HCT116 (cell line): ENCODE measurements at regions of chr1 and their contacts with region 1.

Region 1: GRCh38 chr1:47725992-47726855 is 271.0 kb downstream of the TRABD2B start:
- DNase-seq: peak; percentile 49
- ATAC-seq: peak; percentile 98
- H3K4me3 ChIP-seq: no peak overlapping the region
- H3K27ac ChIP-seq: no peak overlapping the region
- H3K4me1 ChIP-seq: no peaks in the 10 kb centered on the region
- H3K27me3 ChIP-seq: no peaks in the 10 kb centered on the region
- CTCF ChIP-seq: peak; percentile 81 to 95 (median 92)
- POLR2A ChIP-seq: no peak
- RAD21 ChIP-seq: peak; percentile 91

Region 2: DNA sequence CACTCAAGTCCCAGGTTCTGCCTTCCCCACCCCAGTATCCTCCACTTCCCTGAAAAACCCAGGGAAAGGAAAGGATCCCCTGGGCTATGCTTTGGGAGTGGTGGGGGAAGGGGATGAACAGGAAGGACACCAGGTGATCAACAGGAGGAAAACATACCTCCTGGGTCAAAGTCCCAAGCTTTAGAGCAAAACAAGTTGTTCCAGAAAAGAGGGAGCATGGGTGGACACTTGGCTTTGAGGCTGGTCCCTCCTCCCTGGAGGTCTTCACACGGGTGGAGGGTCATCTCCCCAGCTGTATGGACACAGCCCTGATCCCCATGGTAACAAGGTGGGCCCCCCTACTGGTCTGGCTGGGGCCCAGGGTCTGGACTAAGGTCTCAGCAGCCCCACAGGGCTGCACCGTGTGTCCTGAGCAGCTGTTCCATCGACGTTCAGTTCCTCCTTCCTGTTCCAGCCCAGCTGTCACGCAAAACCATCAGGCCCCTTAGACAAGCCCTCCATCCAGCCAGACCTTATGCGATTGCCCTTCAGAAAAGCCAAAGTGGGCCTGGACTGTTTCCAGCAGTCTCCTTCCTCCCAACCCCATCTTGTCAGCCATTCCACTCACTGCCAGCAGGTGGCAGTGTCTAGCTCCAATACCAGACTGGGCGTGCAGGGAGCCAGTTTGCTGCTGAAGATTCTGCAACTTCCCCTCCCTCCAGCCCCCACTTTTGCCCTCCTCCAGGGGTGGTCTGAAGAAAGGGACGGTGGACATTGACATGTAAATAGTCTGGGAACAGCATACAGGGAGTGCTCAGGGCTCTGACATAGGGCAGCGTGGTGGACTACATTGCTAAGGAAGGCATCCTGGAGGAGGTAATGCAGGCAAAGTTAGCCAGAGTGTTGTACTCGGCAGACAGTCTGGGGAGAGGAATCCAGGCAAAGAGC is 533.5 kb before region 1 on chr1:
- CTCF ChIA-PET with region 1: interaction called, 12 read pairs
- POLR2A ChIA-PET with region 1: no interaction called
- RAD21 ChIA-PET with region 1: no interaction called
- intact Hi-C with region 1: loop called (anchors 5 kb)
- DNase-seq: peak; percentile 42
- ATAC-seq: peak; percentile 85
- H3K4me3 ChIP-seq: no peak overlapping the region
- H3K27ac ChIP-seq: no peak overlapping the region
- H3K4me1 ChIP-seq: peaks cover 3 to 19% of the 10 kb centered on the region in 2 experiments; a peak in 3 of 4 replicates
- H3K27me3 ChIP-seq: no peaks in the 10 kb centered on the region
- CTCF ChIP-seq: peak; percentile 76 to 99 (median 98)
- POLR2A ChIP-seq: no peak
- RAD21 ChIP-seq: peak; percentile 85

Region 3: DNA sequence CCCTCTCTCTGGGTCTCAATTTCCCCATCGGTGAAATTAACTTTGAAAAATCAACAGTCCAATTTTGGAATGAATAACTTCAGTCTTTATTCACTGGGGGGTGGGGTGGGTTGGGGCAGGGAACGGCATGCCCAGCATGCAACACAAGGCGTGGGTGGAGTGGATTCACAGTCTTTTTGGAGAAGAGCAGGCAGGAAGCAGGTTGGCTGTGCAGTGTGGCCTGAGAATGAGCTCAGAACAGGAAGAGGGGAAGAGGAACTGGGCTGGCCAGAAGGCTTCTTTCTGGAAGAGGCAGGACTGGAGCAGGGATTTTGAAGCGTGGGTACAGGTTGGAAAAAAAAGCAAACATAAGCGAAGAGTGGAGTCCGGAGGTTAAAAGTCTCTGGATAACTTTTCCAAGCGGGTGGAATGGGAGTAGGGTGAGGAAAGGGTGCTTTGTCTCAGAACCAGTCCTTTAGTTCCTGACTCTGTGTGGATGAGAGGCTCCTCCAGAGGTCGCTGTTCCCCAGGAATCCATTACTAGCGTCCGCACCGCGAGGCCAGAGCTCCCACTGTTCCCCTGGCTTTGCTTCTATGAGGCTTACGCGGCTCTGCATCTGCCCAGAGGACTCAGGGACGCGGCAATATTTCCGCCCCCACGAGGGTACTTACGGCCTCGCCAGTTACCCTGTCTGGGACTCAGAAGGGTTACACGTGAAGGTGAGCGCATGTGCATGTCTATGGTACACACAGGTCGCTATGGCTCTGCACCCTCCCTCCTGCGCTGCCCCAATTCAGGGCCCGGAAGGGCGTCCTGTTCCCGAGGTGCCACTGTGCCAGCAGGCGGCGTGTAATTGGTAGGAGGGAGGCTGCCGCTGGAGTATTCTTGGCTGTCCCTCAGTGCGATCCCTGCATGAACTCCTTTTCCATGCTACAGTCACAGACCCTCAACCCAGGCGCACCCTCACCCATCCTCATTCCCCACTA is 293.9 kb before region 1 on chr1:
- CTCF ChIA-PET with region 1: interaction called, 87 read pairs
- POLR2A ChIA-PET with region 1: interaction called, 5 read pairs
- RAD21 ChIA-PET with region 1: interaction called, 6 to 11 read pairs
- intact Hi-C with region 1: loop called (anchors 1 kb)
- DNase-seq: no peak
- ATAC-seq: peak; percentile 31; the same call in 1 of the 2 replicates
- H3K4me3 ChIP-seq: no peak overlapping the region
- H3K27ac ChIP-seq: no peak overlapping the region
- H3K4me1 ChIP-seq: peaks cover 8 to 32% of the 10 kb centered on the region in 2 experiments
- H3K27me3 ChIP-seq: no peaks in the 10 kb centered on the region
- CTCF ChIP-seq: peak; percentile 21 to 65 (median 61); a peak in 4 of 6 replicates
- POLR2A ChIP-seq: no peak
- RAD21 ChIP-seq: peak; percentile 55

Region 4: DNA sequence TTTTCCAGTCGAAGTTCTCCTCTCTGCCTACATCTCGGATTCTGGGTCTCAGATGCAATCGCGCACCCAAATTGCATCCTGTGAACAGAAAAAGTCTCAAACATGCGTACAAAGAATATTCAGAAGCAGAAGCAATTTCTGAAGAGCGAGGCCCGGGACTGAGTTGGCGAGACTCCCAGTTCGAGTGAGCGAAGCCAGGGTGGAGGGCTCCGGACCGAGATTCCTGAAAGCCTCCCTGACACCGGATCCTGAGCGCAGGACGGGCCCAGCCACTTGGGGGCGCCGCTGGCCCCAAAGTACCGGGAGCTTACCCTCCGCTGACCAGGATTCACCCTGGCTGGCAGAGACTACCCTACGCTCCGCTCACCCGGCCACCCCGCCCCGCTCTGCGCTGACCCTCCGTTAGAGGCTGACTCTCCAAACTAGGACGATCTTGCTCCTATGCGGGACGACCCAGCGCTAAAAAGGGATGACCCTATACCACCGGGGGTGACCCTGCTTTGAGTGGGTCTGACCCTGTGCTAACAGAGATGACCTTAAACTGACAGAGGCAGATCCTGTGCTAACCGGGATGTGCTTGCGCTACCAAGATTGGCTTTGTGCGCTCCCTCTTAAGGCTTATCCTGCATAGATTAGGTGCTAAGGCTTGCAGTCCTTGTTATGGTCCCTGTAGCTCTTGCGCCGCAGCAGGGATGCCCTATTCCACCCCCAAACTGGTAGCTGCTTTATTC is 276.2 kb before region 1 on chr1:
- CTCF ChIA-PET with region 1: interaction called, 14 read pairs
- POLR2A ChIA-PET with region 1: no interaction called
- RAD21 ChIA-PET with region 1: interaction called, 4 read pairs
- intact Hi-C with region 1: no loop called
- DNase-seq: no peak
- ATAC-seq: peak; percentile 93
- H3K4me3 ChIP-seq: no peak overlapping the region
- H3K27ac ChIP-seq: no peak overlapping the region
- H3K4me1 ChIP-seq: no peaks in the 10 kb centered on the region
- H3K27me3 ChIP-seq: peaks cover 14% of the 10 kb centered on the region; the same call in 1 of the 2 replicates
- CTCF ChIP-seq: peak; percentile 62 to 86 (median 63)
- POLR2A ChIP-seq: no peak
- RAD21 ChIP-seq: peak; percentile 68

Region 5: GRCh38 chr1:47710329-47711071 is 15.7 kb before region 1 on chr1:
- CTCF ChIA-PET with region 1: interaction called, 17 read pairs
- POLR2A ChIA-PET with region 1: no interaction called
- RAD21 ChIA-PET with region 1: no interaction called
- intact Hi-C with region 1: no loop called
- DNase-seq: peak; percentile 28
- ATAC-seq: peak; percentile 88
- H3K4me3 ChIP-seq: peak overlapping the region; percentile 16 to 57; a peak in 3 of 4 replicates
- H3K27ac ChIP-seq: no peak overlapping the region
- H3K4me1 ChIP-seq: peaks cover 0 to 18% of the 10 kb centered on the region in 2 experiments; a peak in 1 of 4 replicates
- H3K27me3 ChIP-seq: peaks cover 28% of the 10 kb centered on the region
- CTCF ChIP-seq: peak; percentile 91 to 98 (median 92)
- POLR2A ChIP-seq: no peak
- RAD21 ChIP-seq: peak; percentile 96

Region 6: DNA sequence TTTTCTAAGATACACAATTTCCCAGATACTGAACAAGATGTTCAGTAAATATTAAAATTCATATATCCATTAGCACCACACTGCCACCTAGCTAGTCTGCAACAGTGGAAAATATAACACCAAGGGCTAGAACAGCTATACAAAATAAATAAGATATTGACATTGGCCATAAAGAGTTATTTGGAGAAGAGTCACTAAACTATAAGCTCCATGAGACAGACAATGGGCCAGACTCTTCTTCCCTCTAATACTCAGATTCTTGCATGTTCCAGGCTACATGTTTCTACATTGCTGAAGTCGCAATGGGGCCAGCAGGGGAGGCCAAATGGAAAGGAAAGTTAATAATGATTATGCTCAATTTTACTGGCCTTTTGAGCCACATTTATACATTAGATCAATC is 724.3 kb after region 1 on chr1:
- CTCF ChIA-PET with region 1: no interaction called
- POLR2A ChIA-PET with region 1: no interaction called
- RAD21 ChIA-PET with region 1: no interaction called
- intact Hi-C with region 1: no loop called
- DNase-seq: no peak
- ATAC-seq: peak; percentile 52; the same call in 1 of the 2 replicates
- H3K4me3 ChIP-seq: no peak overlapping the region
- H3K27ac ChIP-seq: no peak overlapping the region
- H3K4me1 ChIP-seq: no peaks in the 10 kb centered on the region
- H3K27me3 ChIP-seq: no peaks in the 10 kb centered on the region
- CTCF ChIP-seq: peak; percentile 17 to 52 (median 39); a peak in 3 of 6 replicates
- POLR2A ChIP-seq: no peak
- RAD21 ChIP-seq: peak; percentile 31; the same call in 1 of the 2 replicates